Right lobe of liver (tissue), 6 donors: ENCODE measurements at regions of chr9 and their contacts with region 1.

Region 1: GRCh38 chr9:128587453-128587852 is 35.1 kb downstream of the SPTAN1 start:
- DNase-seq: no peak
- ATAC-seq: no peak
- H3K4me3 ChIP-seq: no peak overlapping the region
- H3K27ac ChIP-seq: no peak overlapping the region
- H3K4me1 ChIP-seq: peaks cover 0 to 6% (median 0%) of the 10 kb centered on the region in 4 donors
- H3K27me3 ChIP-seq: no peaks in the 10 kb centered on the region
- CTCF ChIP-seq: no peak
- POLR2A ChIP-seq: no peak

Region 2: DNA sequence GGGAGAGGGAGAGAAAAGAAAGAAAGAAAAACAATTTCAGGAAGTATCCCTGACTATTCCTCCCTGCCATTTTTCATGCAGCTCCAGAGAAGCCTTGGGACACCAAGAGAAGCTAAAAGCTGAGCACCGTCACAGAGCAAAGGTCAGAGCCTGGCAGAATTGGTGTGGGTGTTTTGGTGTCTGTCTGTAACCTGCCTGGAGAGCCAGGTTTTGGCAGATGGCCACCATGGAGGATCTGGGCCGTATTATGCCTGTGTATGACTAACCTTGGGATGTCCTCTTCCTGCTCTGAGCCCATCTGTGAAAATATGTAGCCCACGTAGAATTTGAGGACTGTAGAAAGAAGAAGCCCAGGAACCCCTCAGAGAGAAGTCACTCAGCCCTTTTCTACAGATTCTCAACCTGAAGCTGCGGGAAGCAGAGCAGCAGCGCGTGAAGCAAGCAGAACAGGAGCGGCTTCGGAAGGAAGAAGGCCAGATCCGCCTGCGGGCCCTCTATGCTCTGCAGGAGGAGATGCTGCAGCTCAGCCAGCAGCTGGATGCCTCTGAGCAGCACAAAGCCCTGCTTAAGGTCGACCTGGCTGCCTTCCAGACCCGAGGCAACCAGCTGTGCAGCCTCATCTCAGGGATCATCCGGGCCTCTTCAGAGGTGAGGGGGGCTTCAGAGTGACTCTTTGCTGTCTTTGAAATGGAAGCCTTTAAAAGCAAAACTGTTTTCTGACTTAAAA is 64.1 kb before region 1 on chr9:
- intact Hi-C with region 1: loop called in 1 of 2 experiments (anchors 10 kb)
- DNase-seq: peak; percentile 79 to 89 (median 86)
- ATAC-seq: peak; percentile 98 to 99 (median 99)
- H3K4me3 ChIP-seq: no peak overlapping the region
- H3K27ac ChIP-seq: peak overlapping the region in 2 of 3 donors; percentile 66 to 67
- H3K4me1 ChIP-seq: peaks cover 0 to 16% (median 6%) of the 10 kb centered on the region in 4 donors
- H3K27me3 ChIP-seq: no peaks in the 10 kb centered on the region
- CTCF ChIP-seq: no peak
- POLR2A ChIP-seq: no peak